ENCODE measurements at regions of chr1 and their contacts with region 1.

Region 1: DNA sequence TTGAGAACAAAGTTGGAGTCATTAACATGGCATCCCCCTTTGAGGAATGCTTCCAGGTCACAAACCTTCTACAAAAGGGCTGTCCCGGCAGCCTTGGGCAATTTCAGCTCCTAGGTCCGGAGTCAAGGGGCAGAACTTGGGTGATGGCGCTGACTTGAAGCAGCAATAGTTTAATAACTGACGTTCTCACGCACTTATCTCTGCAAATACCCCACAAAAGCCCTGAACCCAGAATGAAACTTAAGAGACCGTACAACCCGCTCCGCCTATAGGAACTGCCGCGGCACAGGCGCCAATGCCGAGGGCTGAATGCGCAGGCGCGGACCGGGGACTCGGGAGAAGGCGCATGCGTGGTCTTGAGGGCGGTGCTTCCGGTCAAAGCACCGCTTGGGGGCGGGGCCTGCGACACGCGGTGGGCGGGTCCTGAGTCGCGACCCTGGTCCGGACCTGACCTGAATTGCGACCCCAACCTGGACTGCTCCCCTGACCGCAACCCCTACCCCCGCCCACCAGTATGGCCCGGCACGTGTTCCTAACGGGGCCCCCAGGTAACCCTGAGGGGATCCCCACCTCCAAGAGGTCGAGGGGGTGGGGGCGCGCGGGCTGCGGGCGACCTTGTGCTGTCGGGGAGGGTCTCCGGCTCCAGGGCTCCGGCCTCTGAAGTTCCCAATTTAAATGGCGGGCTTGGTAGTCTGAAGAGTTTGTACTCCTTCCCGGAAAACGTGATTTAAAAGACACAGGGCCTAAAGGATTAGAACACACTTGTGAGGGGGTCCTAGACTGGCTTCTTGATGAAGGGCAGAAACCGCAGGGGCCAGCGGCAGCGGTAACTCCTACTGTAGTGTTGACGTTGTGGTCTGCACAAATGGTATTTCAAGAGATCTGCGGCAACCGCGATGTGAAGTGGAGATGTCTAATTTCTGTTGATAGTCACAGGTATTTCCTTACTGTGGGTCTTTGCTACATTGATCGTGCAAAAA is at the start of gene NTPCR:
- DNase-seq: peak; percentile 44
- H3K4me3 ChIP-seq: peak within 1 kb of the TSS; percentile 86
- H3K27me3 ChIP-seq: no peaks in the 10 kb centered on the region; the same call in 1 of the 2 replicates
- CTCF ChIP-seq: peak; percentile 31; the same call in 1 of the 2 replicates
- polyA plus RNA-seq, gene NTPCR: 23.0 and 23.4 TPM in 2 replicates

Region 2: GRCh38 chr1:232872738-232873137 is 77.7 kb before region 1 on chr1:
- CTCF ChIA-PET with region 1: no interaction called
- POLR2A ChIA-PET with region 1: interaction called, 22 read pairs
- DNase-seq: no peak
- H3K4me3 ChIP-seq: no peak overlapping the region
- H3K27me3 ChIP-seq: peaks cover 3% of the 10 kb centered on the region
- CTCF ChIP-seq: no peak

Measured in BJ (cell line).